Activated CD4-positive, alpha-beta memory T cell treated with anti-CD3 and anti-CD28 coated beads, Interleukin-2, amount 10 ng/mL, durations not matched to agents 7 days and 5 days (primary cell): ENCODE measurements at regions of chr17 and their contacts with region 1.

Region 1: DNA sequence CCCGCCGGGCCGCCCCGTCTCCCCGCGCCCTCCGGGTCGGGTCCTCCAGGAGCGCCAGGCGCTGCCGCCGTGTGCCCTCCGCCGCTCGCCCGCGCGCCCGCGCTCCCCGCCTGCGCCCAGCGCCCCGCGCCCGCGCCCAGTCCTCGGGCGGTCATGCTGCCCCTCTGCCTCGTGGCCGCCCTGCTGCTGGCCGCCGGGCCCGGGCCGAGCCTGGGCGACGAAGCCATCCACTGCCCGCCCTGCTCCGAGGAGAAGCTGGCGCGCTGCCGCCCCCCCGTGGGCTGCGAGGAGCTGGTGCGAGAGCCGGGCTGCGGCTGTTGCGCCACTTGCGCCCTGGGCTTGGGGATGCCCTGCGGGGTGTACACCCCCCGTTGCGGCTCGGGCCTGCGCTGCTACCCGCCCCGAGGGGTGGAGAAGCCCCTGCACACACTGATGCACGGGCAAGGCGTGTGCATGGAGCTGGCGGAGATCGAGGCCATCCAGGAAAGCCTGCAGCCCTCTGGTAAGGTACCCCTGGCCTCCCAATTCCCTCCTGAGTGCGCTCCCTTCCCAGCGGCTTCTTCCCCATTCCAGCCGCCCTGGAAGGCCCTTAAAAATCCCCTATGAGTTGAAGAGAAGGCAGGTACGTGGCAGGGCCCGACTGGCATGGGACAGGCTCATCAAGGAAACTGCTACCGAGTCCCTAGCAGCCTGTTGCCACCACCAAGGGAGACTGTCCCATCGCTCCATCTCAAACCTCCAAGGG is 505 bp downstream of the IGFBP4 start:
- DNase-seq: peak; percentile 72
- H3K4me3 Mint-ChIP-seq: peak overlapping the region; percentile 82
- H3K27ac Mint-ChIP-seq: peak overlapping the region; percentile 88
- H3K4me1 Mint-ChIP-seq: peaks cover 48% of the 10 kb centered on the region
- H3K27me3 Mint-ChIP-seq: peaks cover 31% of the 10 kb centered on the region

Region 2: GRCh38 chr17:40427002-40427491 is 16.7 kb before region 1 on chr17:
- CTCF ChIA-PET with region 1: interaction called, 19 read pairs
- POLR2A ChIA-PET with region 1: interaction called, 5 read pairs
- DNase-seq: peak; percentile 35
- H3K4me3 Mint-ChIP-seq: no peak overlapping the region
- H3K27ac Mint-ChIP-seq: peak overlapping the region; percentile 67
- H3K4me1 Mint-ChIP-seq: peaks cover 29% of the 10 kb centered on the region
- H3K27me3 Mint-ChIP-seq: peaks cover 31% of the 10 kb centered on the region

Region 3: GRCh38 chr17:40536295-40537171 is 92.8 kb after region 1 on chr17:
- CTCF ChIA-PET with region 1: interaction called, 129 read pairs
- POLR2A ChIA-PET with region 1: interaction called, 56 read pairs
- DNase-seq: no peak
- H3K4me3 Mint-ChIP-seq: no peak overlapping the region
- H3K27ac Mint-ChIP-seq: no peak overlapping the region
- H3K4me1 Mint-ChIP-seq: peaks cover 73% of the 10 kb centered on the region
- H3K27me3 Mint-ChIP-seq: peaks cover 32% of the 10 kb centered on the region